GM12878 (cell line): ENCODE measurements at regions of chr3 and their contacts with region 1.

Region 1: DNA sequence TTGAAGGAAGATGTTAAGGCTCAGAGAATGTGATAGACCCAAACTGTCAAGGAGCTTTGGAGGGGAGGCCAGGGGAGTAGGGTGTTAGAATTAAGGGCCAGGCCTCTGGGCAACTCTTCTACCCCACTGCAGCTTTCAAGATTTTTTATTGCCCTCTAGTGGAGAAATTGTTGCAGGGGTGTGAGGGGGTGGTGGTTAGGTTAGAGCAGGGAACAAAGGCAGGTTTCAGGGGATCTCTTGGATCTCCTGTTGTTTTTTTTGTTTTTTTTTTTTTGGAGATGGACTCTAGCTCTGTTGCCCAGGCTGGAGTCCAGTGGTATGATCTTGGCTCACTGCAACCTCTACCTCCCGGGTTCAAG is 1.4 kb upstream of the SEC13 start:
- DNase-seq: no peak
- ATAC-seq: peak; percentile 69
- H3K4me3 ChIP-seq: no peak overlapping the region
- H3K27ac ChIP-seq: no peak overlapping the region
- H3K4me1 ChIP-seq: 0 out of 2 replicates have a peak, but pooled peaks cover 3% of the 10 kb centered on the region
- H3K27me3 ChIP-seq: peaks cover 0 to 3% of the 10 kb centered on the region in 2 experiments; a peak in 1 of 4 replicates
- CTCF ChIP-seq: peak; percentile 57 to 68 (median 62)
- EP300 ChIP-seq: no peak
- POLR2A ChIP-seq: no peak
- RAD21 ChIP-seq: peak; percentile 70

Region 2: DNA sequence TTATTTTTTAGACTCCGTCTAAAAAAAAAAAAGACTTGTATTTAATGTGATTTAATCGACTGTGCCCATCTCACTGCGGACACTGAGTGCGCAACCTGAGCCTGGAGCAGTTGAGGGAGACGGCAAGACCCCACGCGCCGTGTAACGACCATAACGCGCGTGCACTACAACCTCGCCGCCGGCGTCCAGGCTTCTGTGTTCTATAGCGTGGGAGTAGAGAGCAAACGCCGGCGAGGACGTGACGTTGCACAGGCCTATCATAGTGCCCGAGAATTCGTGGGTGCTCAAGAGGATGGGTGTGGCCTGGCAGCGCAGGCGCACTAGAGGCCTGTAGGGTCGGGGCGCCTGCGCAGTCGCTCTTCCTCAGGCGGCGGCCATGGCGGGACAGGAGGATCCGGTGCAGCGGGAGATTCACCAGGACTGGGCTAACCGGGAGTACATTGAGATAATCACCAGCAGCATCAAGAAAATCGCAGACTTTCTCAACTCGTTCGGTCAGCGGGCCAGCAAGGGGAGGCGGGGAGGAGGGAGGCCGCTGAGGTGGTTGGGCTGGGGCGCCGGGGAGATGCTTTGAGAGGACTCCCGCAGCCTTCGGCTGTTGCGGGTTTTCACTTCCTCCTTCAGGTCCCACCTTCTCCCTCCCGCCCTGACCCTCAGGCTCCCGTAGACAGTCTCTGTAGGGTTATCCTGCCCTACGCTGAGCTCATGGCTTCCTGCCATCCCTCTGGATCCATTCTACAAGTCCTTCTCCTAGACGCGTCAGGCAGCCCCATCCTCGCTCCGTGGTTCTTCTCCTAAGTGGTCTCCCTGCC is 206.8 kb before region 1 on chr3 and contains the start of gene BRK1:
- CTCF ChIA-PET with region 1: interaction called, 3 read pairs
- POLR2A ChIA-PET with region 1: interaction called, 4 read pairs
- RAD21 ChIA-PET with region 1: no interaction called
- SMC1A ChIA-PET with region 1: no interaction called
- in situ Hi-C with region 1: no loop called
- intact Hi-C with region 1: loop called (anchors 5 kb)
- DNase-seq: peak; percentile 94
- ATAC-seq: peak; percentile 95
- H3K4me3 ChIP-seq: peak within 1 kb of the TSS; percentile 89
- H3K27ac ChIP-seq: peak within 1 kb of the TSS; percentile 83
- H3K4me1 ChIP-seq: peaks cover 3% of the 10 kb centered on the region
- H3K27me3 ChIP-seq: no peaks in the 10 kb centered on the region
- CTCF ChIP-seq: no peak
- EP300 ChIP-seq: 0 out of 4 replicates have a peak, but pooled peaks of 1 of the 2 experiments have one; percentile 11
- POLR2A ChIP-seq: peak; percentile 93
- RAD21 ChIP-seq: no peak
- polyA plus RNA-seq, gene BRK1: 309 to 457 TPM

Region 3: GRCh38 chr3:10398341-10398740 is 76.0 kb after region 1 on chr3:
- CTCF ChIA-PET with region 1: no interaction called
- POLR2A ChIA-PET with region 1: no interaction called
- RAD21 ChIA-PET with region 1: no interaction called
- SMC1A ChIA-PET with region 1: no interaction called
- in situ Hi-C with region 1: no loop called
- intact Hi-C with region 1: no loop called
- DNase-seq: no peak
- ATAC-seq: no peak
- H3K4me3 ChIP-seq: no peak overlapping the region
- H3K27ac ChIP-seq: no peak overlapping the region
- H3K4me1 ChIP-seq: no peaks in the 10 kb centered on the region
- H3K27me3 ChIP-seq: no peaks in the 10 kb centered on the region; a peak in 2 of 4 replicates
- CTCF ChIP-seq: no peak
- EP300 ChIP-seq: no peak
- POLR2A ChIP-seq: no peak
- RAD21 ChIP-seq: no peak